Left lung (tissue), 14 donors: ENCODE measurements at regions of chr11 and their contacts with region 1.

Region 1: DNA sequence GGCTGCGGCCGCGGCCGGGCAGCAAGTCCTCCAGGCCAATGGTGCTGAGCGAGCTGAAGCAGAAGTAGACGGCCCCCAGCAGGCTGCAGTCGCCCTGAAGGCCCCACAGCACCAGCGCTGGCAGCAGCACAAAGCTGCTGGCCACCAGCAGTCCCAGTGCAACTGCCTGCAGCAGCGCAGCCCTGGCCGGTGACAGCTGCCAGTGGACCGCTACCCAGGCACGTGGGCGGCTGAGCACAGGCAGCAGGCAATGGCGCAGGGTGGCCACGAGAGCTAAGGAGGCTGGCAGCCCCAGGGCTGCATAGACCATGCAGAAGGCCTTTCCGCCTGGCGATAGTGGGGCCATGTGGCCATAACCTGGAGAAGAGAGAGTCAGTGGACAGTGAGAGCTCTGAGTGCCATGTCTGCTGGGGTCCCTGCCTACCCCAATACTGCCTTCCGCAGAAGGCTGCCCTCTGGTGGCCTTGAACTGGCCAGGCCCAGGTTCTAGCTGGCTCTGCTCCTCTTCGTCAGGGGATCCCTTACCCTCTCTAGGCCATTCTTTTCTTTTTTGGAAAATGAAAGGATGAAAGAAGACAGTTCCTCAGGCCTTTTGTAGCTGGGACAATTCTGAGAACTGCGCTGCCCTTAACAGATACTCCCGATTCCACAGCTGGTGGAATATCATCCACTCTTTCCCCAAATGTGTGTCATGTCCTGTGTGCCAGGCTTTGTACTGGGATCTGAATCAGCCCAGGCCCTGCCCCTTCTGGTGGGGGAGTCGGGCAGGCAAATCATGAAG is 1.9 kb downstream of the KCNK7 start:
- DNase-seq: no peak
- ATAC-seq: peak; percentile 28
- H3K4me3 ChIP-seq: no peak overlapping the region
- H3K27ac ChIP-seq: peak overlapping the region in 1 of 2 donors; percentile 11
- H3K4me1 ChIP-seq: peaks cover 6 to 46% of the 10 kb centered on the region in 2 donors
- H3K27me3 ChIP-seq: no peaks in the 10 kb centered on the region
- CTCF ChIP-seq: peak; percentile 22 to 57

Region 2: GRCh38 chr11:65540297-65541092 is 53.2 kb before region 1 on chr11:
- intact Hi-C with region 1: loop called in 1 of 2 experiments (anchors 10 kb)
- DNase-seq: peak; percentile 81 to 98 (median 89)
- ATAC-seq: peak; percentile 94
- H3K4me3 ChIP-seq: peak overlapping the region; percentile 37 to 47
- H3K27ac ChIP-seq: peak overlapping the region; percentile 85 to 88
- H3K4me1 ChIP-seq: peaks cover 13 to 31% of the 10 kb centered on the region in 2 donors
- H3K27me3 ChIP-seq: no peaks in the 10 kb centered on the region
- CTCF ChIP-seq: peak; percentile 83 to 85